GM18951 (cell line): ENCODE measurements at regions of chr1 and their contacts with region 1.

Region 1: GRCh38 chr1:62746085-62746808 is 37.7 kb upstream of the ATG4C start:
- POLR2A ChIP-seq: no peak

Region 2: GRCh38 chr1:62159940-62160348 is 586.3 kb before region 1 on chr1:
- in situ Hi-C with region 1: loop called (anchors 25 kb)
- POLR2A ChIP-seq: no peak

Region 3: GRCh38 chr1:62508187-62508758 is 238.0 kb before region 1 on chr1:
- in situ Hi-C with region 1: loop called (anchors 25 kb)
- POLR2A ChIP-seq: no peak

Region 4: GRCh38 chr1:62977366-62977765 is 231.1 kb after region 1 on chr1:
- in situ Hi-C with region 1: no loop called
- POLR2A ChIP-seq: no peak